Common myeloid progenitor, CD34-positive (primary cell): ENCODE measurements at regions of chr11 and their contacts with region 1.

Region 1: DNA sequence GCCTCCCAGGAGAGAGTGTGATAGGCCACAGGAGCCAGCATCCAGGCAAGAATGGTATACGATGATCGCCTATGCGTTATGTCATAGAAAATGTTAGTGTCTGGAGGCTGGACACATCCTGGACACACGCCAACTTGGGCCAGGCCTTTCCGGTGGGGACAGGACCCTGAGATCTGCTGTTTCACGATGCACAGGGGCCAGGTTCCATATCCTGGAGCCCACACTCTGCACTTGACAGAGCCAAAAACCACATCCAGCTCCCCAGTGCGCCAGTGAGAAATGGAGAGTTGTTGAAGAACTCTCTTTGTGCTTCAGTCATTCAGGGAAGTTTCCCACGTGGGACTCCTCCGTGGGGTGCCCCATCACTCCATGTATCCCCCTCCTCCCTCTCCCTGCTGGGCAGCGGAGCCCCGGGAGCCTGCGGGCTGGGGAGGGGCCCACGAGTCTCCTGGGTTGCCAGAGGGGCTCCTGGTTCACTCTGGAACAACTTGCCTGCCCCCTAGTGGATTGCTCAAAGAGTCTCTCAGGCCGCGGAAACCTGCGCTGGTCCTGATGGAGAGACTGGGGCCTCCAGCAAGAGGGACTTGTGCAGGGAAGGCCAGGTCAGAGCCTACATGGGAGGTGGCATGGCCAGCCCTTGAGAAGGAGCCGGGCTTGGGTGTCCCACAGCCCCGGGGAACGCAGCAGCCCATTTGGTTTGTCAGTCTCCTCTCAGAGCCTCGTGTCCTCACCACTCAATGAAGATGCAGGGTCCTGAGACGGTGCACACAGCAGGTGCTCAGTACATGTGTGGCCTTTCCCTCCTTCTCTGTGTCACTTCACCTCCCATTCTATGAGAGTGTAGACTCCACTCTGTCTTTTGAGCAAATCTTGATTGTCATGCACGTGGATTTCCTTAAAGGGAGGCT is 10.2 kb upstream of the LRRC32 start:
- DNase-seq: peak; percentile 72 to 76 (median 76)
- H3K4me3 ChIP-seq: peak overlapping the region in 1 of 7 experiments; percentile 27
- H3K27ac ChIP-seq: no peak overlapping the region
- H3K4me1 ChIP-seq: peaks cover 0 to 47% (median 28%) of the 10 kb centered on the region in 4 experiments
- H3K27me3 ChIP-seq: peaks cover 0 to 2% (median 0%) of the 10 kb centered on the region in 5 experiments

Region 2: DNA sequence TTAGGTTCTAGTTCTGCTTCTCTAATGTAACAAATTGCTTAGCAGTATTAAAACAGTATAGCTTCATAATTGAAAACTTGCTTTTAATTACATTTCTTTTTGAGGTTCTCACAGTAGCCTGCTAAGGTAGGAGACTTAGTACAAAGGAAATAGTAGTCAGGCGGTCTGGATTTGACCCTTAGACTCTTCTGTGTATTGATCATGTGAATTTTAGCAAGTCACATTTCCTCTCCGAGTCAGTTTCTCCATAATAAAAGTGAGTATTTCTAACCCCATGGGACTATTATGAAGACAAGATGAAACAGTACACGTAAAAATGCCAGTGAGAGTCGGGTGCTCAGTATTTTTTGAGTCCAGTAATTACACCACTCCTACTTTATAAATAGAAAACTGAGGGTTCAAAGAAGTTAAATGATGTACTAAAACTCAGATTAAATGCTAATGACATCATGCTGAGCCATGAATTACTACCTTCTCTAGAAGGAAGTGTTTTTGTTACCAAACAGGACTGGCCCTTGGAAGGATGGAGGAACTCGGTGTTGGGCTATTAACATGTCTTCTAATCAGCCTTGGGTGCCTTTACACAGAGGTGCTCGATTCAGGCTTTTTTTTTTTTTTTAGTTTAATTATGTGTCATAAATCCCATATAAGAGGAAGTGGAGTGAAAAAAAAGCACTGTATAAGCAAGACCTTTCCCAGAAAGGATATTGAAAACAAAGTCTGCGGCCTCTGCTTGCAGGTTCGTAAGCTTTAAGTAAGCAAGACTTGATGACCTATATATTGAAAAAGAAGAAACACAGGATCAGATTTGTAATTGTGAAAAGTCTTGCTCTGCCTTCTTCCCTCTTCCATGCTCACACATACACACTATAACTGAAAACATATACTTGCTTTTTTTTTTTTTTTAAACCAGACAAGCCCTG is 127.0 kb before region 1 on chr11:
- CTCF ChIA-PET with region 1: interaction called, 15 read pairs
- POLR2A ChIA-PET with region 1: no interaction called
- DNase-seq: peak in 2 of 3 donors; percentile 28 to 39
- H3K4me3 ChIP-seq: no peak overlapping the region
- H3K27ac ChIP-seq: no peak overlapping the region
- H3K4me1 ChIP-seq: peaks cover 0 to 10% (median 2%) of the 10 kb centered on the region in 4 experiments
- H3K27me3 ChIP-seq: no peaks in the 10 kb centered on the region

Region 3: DNA sequence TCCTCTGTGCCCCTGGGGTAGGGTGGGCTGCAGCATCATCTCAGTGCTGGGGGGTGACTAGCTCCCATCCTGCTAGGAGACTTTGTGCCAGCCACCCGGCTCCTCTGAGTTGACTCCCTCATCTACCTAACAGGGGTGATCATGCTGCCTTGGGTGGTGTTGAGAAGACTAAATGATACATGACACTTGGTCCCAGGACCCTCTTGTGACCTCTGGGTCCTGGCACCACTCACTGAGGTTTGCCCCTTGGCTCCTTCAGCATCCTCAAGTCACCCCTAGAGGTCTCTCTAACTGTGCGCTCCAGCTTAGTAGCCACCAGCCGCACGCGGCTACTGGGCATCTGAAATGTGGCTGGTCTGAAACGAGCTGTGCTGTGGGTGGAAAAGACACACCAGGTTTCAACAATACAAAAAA is 82.3 kb before region 1 on chr11:
- CTCF ChIA-PET with region 1: interaction called, 192 read pairs
- POLR2A ChIA-PET with region 1: no interaction called
- DNase-seq: peak; percentile 44 to 69 (median 65)
- H3K4me3 ChIP-seq: no peak overlapping the region
- H3K27ac ChIP-seq: no peak overlapping the region
- H3K4me1 ChIP-seq: peaks cover 0 to 15% (median 12%) of the 10 kb centered on the region in 4 experiments
- H3K27me3 ChIP-seq: peaks cover 0 to 2% (median 0%) of the 10 kb centered on the region in 5 experiments

Region 4: DNA sequence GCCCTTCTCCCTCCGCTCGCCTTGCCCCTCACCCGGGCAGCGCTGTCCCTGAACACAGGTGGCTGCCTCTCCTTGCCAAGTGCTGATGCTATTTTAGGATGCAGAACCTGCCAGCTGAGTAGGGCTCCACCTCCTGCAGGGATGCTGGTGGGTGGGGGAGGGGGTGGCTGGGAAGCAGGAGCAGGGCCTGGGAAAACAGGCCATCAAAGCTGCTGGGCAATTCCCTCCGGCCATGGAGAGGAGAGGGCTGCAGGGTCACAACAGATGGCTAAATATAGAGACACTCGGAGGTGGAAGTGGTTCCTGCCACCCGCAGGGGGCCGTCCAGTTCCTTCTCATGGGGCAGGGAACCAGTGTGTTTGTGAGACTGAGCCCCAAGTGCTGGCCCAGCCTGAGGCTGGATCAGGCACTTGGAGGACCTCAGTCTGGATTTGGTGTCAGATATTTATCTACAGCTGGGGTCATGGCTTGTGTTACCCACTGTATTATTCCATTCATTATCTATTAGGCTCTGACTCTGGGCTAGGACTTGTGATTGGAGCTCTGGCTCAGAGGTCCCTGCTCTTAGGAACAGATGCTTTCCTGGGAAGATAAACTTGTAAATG is 69.8 kb before region 1 on chr11:
- CTCF ChIA-PET with region 1: interaction called, 192 read pairs
- POLR2A ChIA-PET with region 1: no interaction called
- DNase-seq: peak; percentile 42 to 53 (median 53)
- H3K4me3 ChIP-seq: no peak overlapping the region
- H3K27ac ChIP-seq: no peak overlapping the region
- H3K4me1 ChIP-seq: peaks cover 0 to 13% (median 5%) of the 10 kb centered on the region in 4 experiments
- H3K27me3 ChIP-seq: peaks cover 0 to 2% (median 0%) of the 10 kb centered on the region in 5 experiments

Region 5: DNA sequence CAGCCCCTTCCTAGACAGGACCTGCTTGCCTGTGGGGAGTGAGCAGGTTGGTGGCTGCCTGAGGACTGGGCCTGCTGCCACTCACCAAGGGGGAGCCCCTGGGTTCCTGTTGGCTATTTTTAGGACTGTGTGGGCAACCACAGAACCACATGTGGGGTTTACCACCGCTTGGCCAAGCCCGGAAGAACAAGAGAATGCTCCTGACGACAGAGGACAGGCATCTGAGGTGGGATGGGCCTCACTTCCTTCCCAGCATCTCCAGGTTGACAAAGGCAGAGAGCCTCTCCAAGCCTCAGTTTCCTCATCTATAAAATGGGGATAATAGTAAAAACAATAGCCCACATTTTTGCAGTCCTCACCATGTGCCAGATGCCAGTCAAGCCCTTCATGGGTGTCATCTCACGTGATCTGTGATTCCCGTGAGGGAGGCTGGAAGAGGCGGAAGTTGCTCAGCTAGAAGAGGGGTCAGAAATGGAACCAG is 53.8 kb before region 1 on chr11:
- CTCF ChIA-PET with region 1: interaction called, 15 read pairs
- POLR2A ChIA-PET with region 1: interaction called, 3 read pairs
- DNase-seq: peak; percentile 87 to 98 (median 98)
- H3K4me3 ChIP-seq: peak overlapping the region in 1 of 7 experiments; percentile 44
- H3K27ac ChIP-seq: no peak overlapping the region
- H3K4me1 ChIP-seq: peaks cover 7 to 37% (median 35%) of the 10 kb centered on the region in 4 experiments
- H3K27me3 ChIP-seq: peaks cover 0 to 12% (median 3%) of the 10 kb centered on the region in 5 experiments

Region 6: GRCh38 chr11:76670485-76671236 is 10.1 kb before region 1 on chr11 and contains the start of gene LRRC32:
- CTCF ChIA-PET with region 1: interaction called, 11 read pairs
- POLR2A ChIA-PET with region 1: no interaction called
- DNase-seq: peak in 2 of 3 donors; percentile 74 to 82
- H3K4me3 ChIP-seq: peak within 1 kb of the TSS in 5 of 7 experiments; percentile 13 to 61 (median 52)
- H3K27ac ChIP-seq: no peak within 1 kb of the TSS
- H3K4me1 ChIP-seq: peaks cover 8 to 55% (median 36%) of the 10 kb centered on the region in 4 experiments
- H3K27me3 ChIP-seq: peaks cover 0 to 32% (median 10%) of the 10 kb centered on the region in 5 experiments

Region 7: DNA sequence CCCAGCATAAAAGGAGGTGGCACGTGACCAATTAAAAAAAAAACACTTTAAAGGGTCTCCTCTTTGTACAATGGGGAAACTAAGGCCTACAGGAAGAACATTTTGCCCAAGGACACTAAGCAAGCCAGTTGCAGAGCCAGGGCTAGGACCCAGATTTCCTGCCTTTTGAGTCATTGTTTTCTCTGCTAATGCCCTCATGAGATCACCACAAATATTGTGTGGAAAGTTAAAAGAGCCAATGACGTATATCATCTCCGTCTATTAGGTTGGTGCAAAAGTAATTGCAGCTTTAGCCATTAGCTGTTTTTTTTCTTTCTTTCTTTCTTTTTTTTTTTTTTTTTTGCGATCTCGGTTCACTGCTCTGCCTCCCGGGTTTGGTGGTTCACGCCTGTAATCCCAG is 13.9 kb after region 1 on chr11:
- CTCF ChIA-PET with region 1: interaction called, 24 read pairs
- POLR2A ChIA-PET with region 1: no interaction called
- DNase-seq: no peak
- H3K4me3 ChIP-seq: no peak overlapping the region
- H3K27ac ChIP-seq: no peak overlapping the region
- H3K4me1 ChIP-seq: peaks cover 0 to 26% (median 13%) of the 10 kb centered on the region in 4 experiments
- H3K27me3 ChIP-seq: peaks cover 0 to 4% (median 0%) of the 10 kb centered on the region in 5 experiments

Region 8: GRCh38 chr11:76756341-76756741 is 75.6 kb after region 1 on chr11:
- CTCF ChIA-PET with region 1: no interaction called
- POLR2A ChIA-PET with region 1: no interaction called
- DNase-seq: no peak
- H3K4me3 ChIP-seq: no peak overlapping the region
- H3K27ac ChIP-seq: no peak overlapping the region
- H3K4me1 ChIP-seq: no peaks in the 10 kb centered on the region
- H3K27me3 ChIP-seq: peaks cover 0 to 11% (median 0%) of the 10 kb centered on the region in 5 experiments

Region 9: DNA sequence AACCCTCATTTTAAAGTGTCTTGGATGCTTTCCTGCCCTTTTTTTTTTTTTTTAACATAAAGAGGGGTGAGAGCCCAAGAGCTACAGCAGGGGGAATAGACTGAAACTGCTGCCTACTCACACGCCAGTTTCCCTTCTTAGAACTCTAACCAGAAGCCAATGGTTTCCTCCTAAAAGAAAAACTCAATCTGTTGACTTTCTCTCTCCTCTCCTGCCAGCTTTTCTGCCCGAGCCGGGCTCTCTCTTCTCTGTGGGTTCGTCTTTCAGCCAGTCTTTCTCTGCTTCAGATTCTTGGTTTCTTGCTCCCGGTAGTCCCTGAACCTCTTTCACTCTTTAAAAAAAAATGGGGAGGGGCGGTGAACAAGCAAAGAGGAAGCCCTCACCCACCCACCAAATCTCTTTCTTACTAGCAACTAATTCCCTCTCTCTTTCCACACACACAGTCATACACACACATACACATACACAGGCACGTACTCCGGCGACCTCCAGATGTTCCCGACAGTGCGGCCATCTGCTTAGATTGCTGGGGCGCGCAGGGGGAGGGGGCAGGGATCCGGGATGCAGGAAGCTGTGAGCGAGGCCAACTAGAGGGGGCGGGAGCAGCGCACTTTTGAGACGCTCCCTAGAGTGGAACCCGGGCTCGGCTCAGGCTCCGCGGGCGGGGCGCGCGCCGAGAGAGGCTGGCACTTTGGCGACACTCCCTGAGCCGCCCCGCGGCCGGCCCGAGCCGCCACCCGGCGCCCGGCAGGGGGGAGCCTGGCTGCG is 101.9 kb after region 1 on chr11:
- CTCF ChIA-PET with region 1: no interaction called
- POLR2A ChIA-PET with region 1: no interaction called
- DNase-seq: peak; percentile 54 to 81 (median 73)
- H3K4me3 ChIP-seq: peak overlapping the region; percentile 17 to 81 (median 66)
- H3K27ac ChIP-seq: peak overlapping the region in 1 of 2 experiments; percentile 45
- H3K4me1 ChIP-seq: peaks cover 0 to 25% (median 23%) of the 10 kb centered on the region in 4 experiments
- H3K27me3 ChIP-seq: peaks cover 0 to 44% (median 10%) of the 10 kb centered on the region in 5 experiments